Tibial artery (tissue), 4 donors: ENCODE measurements at regions of chr2 and their contacts with region 1.

Region 1: GRCh38 chr2:8171608-8172007 is 510.2 kb upstream of the ID2 start:
- DNase-seq: no peak
- H3K4me3 ChIP-seq: no peak overlapping the region
- H3K27ac ChIP-seq: peak overlapping the region in 1 of 2 donors; percentile 37
- H3K4me1 ChIP-seq: peaks cover 0 to 70% (median 26%) of the 10 kb centered on the region in 4 donors
- H3K27me3 ChIP-seq: no peaks in the 10 kb centered on the region
- CTCF ChIP-seq: no peak

Region 2: GRCh38 chr2:8119782-8120505 is 51.7 kb before region 1 on chr2:
- intact Hi-C with region 1: no loop called
- DNase-seq: no peak
- H3K4me3 ChIP-seq: no peak overlapping the region
- H3K27ac ChIP-seq: no peak overlapping the region
- H3K4me1 ChIP-seq: peaks cover 0 to 21% (median 3%) of the 10 kb centered on the region in 4 donors
- H3K27me3 ChIP-seq: no peaks in the 10 kb centered on the region
- CTCF ChIP-seq: no peak

Region 3: GRCh38 chr2:8215159-8215863 is 43.7 kb after region 1 on chr2:
- intact Hi-C with region 1: loop called (anchors 5 kb)
- DNase-seq: no peak
- H3K4me3 ChIP-seq: no peak overlapping the region
- H3K27ac ChIP-seq: peak overlapping the region in 1 of 2 donors; percentile 74
- H3K4me1 ChIP-seq: peaks cover 0 to 34% (median 9%) of the 10 kb centered on the region in 4 donors
- H3K27me3 ChIP-seq: no peaks in the 10 kb centered on the region
- CTCF ChIP-seq: no peak

Region 4: DNA sequence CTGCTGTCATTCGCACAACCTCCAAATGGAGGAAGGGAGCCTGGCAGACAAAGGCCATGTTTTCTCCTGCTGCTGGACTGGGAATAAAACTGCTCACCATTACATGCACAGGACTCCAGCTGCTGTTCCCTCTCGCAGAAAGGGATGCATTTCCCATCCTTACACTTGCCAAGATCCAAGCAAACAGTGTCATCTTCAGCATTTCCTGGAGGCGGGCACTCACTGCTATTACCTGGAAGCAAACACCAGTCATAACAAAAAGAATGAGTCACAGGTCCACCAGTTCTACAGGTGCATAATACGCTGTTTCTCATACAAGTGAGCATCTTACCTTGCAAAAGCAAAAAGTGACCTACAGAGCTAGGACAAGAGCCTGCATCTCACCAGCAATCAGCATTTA is 1325.4 kb after region 1 on chr2:
- intact Hi-C with region 1: no loop called
- DNase-seq: no peak
- H3K4me3 ChIP-seq: no peak overlapping the region
- H3K27ac ChIP-seq: no peak overlapping the region
- H3K4me1 ChIP-seq: peaks cover 0 to 28% (median 9%) of the 10 kb centered on the region in 4 donors
- H3K27me3 ChIP-seq: no peaks in the 10 kb centered on the region
- CTCF ChIP-seq: no peak